ENCODE measurements at regions of chrX and their contacts with region 1.

Region 1: DNA sequence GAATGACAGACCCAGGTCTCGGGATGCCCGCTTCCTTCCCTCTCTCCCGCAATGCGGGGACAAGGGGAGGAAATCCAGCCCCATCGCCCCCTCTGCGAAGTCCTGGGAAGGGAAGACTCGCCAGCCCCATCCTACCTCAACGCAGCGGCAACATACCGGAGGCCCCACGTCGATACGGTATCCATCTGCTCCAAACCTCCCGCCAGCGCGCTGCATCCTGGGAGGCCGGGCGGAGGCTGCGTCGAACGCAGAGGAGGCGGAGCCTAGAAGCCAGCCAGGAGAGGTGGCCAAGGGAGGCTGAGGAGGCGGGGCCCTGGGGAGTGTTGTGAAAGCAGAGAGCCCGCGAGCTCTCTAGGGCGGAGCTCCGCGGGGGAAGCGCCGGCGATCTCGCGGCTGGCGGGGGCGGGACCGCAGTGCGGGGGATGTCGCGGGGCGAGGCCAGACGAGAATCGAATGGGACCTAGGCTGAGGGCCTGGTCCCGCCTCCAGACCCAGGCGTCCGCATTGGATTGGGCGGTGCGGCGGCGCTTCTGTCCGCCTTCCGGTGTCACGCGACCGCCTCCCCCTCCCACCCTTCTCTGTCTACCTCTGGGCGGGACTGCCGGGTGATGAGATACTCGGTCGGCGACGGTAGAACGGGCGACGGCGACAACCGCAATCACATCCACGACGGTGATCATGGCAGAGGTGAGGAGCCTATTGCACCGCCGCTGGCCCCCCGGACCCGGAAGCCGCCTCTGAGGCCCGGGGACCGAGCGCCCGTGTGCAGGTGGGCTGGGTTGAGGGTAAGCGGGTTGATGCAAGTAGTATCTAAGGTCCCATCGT is at the starts of genes FANCB and MOSPD2:
- DNase-seq: peak; percentile 95
- H3K4me3 Mint-ChIP-seq: peak within 1 kb of the TSS; percentile 77
- H3K27ac Mint-ChIP-seq: peak within 1 kb of the TSS; percentile 75
- H3K4me1 Mint-ChIP-seq: peaks cover 26% of the 10 kb centered on the region
- H3K27me3 Mint-ChIP-seq: no peaks in the 10 kb centered on the region
- total RNA-seq, gene FANCB: 16.5 to 17.9 TPM
- total RNA-seq, gene MOSPD2: 16.0 to 16.1 TPM

Region 2: DNA sequence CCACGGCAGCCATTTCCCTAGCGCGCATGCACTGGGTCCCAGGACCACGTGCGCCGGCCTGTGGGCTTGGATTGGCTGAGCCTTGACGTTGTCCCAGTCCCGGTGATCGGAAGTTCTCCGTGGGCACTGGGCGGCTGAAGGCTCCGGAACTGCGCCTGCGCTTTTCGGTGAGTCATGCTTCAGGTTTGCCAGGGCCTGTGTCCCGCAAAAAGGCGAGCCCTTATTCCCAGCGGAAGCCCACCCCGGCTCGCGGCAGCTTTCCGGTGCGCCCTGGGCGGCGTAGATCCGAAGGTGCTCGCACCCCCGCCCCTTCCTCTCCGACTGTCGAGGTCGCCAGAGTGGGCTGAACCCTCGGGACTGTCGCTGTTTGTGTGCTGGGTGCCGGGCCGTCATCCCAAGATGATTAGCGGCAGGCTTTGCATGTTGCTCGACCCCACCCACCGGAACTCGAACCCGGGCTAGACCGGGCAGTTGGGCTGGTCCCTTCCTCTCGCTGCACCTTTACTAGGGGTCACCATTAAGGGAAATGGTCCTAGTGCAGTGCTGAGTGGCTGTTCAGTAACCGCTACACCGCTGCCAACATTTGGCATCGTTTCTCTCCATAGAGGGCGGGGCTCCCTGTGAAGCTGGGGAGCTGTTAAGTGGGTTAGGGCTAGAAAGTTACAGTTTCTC is 1219.9 kb before region 1 on chrX and contains the start of gene TCEANC:
- CTCF ChIA-PET with region 1: no interaction called
- intact Hi-C with region 1: loop called (anchors 5 kb)
- DNase-seq: peak; percentile 95
- H3K4me3 Mint-ChIP-seq: peak within 1 kb of the TSS; percentile 88
- H3K27ac Mint-ChIP-seq: peak within 1 kb of the TSS; percentile 93
- H3K4me1 Mint-ChIP-seq: peaks cover 24% of the 10 kb centered on the region
- H3K27me3 Mint-ChIP-seq: no peaks in the 10 kb centered on the region
- total RNA-seq, gene TCEANC: 2.5 to 2.7 TPM

Region 3: DNA sequence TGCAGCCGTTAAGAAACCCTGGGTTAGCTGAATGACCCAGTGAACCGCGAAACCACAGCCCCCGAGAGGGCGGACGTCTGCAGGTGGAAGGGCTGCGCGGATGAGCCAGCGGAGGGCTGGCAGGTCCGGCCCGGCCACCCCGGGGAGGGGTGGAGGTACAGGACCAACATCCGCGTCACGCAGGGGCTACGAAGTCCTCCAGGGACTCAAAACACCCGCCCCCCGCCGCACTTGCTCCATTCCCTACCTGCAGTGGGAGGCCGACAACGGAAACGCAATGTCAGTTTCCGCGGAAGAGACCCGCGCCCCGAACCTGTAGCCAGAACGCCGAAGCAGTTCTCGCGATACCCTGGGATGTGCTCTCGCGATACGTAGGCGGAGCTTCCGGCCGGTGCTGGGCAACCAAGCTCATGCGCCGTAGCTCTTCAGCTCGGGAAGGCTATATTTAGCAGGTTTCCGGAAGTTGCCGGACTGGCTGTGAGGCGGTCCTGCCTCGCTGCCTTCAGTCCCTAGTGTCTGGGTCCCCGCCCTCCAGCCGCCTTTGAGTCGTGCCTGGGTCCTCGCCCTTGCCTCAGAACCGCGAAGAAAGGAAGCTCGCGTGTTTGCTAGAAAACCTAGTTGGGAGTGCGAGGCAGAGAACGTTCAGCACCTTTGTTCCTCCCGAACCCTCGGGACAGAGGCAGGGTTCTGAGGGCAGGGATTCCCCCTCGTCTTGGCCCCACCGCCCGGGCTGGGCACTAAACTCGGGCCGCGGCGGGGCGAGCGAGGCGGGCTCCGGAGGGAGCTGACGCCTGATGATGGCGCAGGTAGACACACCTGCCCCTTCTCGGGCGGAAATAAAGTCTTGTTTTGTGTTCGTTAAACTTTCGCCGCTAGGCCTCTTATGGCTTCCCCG is 1138.5 kb before region 1 on chrX and contains the starts of genes OFD1 and TRAPPC2:
- CTCF ChIA-PET with region 1: no interaction called
- intact Hi-C with region 1: loop called (anchors 10 kb)
- DNase-seq: peak; percentile 92
- H3K4me3 Mint-ChIP-seq: peak within 1 kb of the TSS; percentile 95
- H3K27ac Mint-ChIP-seq: peak within 1 kb of the TSS; percentile 92
- H3K4me1 Mint-ChIP-seq: peaks cover 43% of the 10 kb centered on the region
- H3K27me3 Mint-ChIP-seq: no peaks in the 10 kb centered on the region
- total RNA-seq, gene OFD1: 25.3 to 26.2 TPM
- total RNA-seq, gene TRAPPC2: 9.6 to 10.7 TPM

Region 4: GRCh38 chrX:14209034-14209433 is 664.0 kb before region 1 on chrX:
- CTCF ChIA-PET with region 1: no interaction called
- intact Hi-C with region 1: no loop called
- DNase-seq: no peak
- H3K4me3 Mint-ChIP-seq: no peak overlapping the region
- H3K27ac Mint-ChIP-seq: no peak overlapping the region
- H3K4me1 Mint-ChIP-seq: no peaks in the 10 kb centered on the region
- H3K27me3 Mint-ChIP-seq: no peaks in the 10 kb centered on the region

Region 5: GRCh38 chrX:14509325-14510057 is 363.6 kb before region 1 on chrX:
- CTCF ChIA-PET with region 1: no interaction called
- intact Hi-C with region 1: no loop called
- DNase-seq: no peak
- H3K4me3 Mint-ChIP-seq: no peak overlapping the region
- H3K27ac Mint-ChIP-seq: no peak overlapping the region
- H3K4me1 Mint-ChIP-seq: peaks cover 4% of the 10 kb centered on the region
- H3K27me3 Mint-ChIP-seq: no peaks in the 10 kb centered on the region

Region 6: DNA sequence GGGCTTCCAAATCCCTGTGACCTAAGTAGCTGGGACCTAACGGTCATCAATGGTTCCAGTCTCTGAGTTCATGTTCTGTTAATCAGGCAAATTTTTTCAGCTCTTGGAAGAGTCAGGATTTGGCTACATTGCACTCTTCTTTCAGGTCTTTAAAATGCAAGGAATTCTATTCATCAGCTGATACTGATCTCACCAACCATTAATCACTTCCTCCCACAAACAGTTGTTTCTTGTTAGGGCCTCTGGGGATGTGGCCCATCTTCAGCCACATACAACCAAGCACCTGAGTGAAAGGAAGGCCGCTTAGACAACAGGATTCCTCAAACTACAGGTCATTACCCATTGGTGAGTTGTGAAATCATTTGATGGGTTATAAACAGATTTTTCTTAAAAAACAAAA is 71.9 kb before region 1 on chrX:
- CTCF ChIA-PET with region 1: no interaction called
- intact Hi-C with region 1: no loop called
- DNase-seq: no peak
- H3K4me3 Mint-ChIP-seq: no peak overlapping the region
- H3K27ac Mint-ChIP-seq: no peak overlapping the region
- H3K4me1 Mint-ChIP-seq: peaks cover 13% of the 10 kb centered on the region
- H3K27me3 Mint-ChIP-seq: no peaks in the 10 kb centered on the region

Region 7: DNA sequence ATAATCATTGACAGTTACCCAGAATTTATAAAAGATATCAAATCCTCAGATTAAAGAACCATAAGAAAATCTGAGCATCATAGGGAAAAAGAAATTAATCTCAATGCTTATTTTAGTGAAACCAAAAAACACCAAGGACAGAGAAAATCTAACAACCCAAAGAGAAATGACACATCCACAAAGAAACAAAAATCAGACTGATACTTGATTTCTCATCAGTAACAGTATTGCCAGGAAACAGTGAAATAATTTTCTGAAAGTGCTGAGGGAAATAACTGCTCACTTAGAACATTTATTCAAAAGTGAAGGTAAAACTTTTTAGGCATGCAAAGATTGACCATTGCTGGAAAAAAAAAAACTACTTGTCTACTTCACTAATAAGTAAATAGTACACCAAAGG is 10.8 kb after region 1 on chrX:
- CTCF ChIA-PET with region 1: no interaction called
- intact Hi-C with region 1: loop called (anchors 1 kb)
- DNase-seq: no peak
- H3K4me3 Mint-ChIP-seq: peak overlapping the region; percentile 63
- H3K27ac Mint-ChIP-seq: peak overlapping the region; percentile 94
- H3K4me1 Mint-ChIP-seq: peaks cover 60% of the 10 kb centered on the region
- H3K27me3 Mint-ChIP-seq: no peaks in the 10 kb centered on the region

Region 8: GRCh38 chrX:15158736-15159406 is 285.8 kb after region 1 on chrX:
- CTCF ChIA-PET with region 1: no interaction called
- intact Hi-C with region 1: loop called (anchors 2 kb)
- DNase-seq: peak; percentile 51
- H3K4me3 Mint-ChIP-seq: peak overlapping the region; percentile 54
- H3K27ac Mint-ChIP-seq: peak overlapping the region; percentile 53
- H3K4me1 Mint-ChIP-seq: peaks cover 35% of the 10 kb centered on the region
- H3K27me3 Mint-ChIP-seq: no peaks in the 10 kb centered on the region

Region 9: GRCh38 chrX:15598036-15598435 is 725.0 kb after region 1 on chrX:
- CTCF ChIA-PET with region 1: no interaction called
- intact Hi-C with region 1: no loop called
- DNase-seq: no peak
- H3K4me3 Mint-ChIP-seq: no peak overlapping the region
- H3K27ac Mint-ChIP-seq: no peak overlapping the region
- H3K4me1 Mint-ChIP-seq: no peaks in the 10 kb centered on the region
- H3K27me3 Mint-ChIP-seq: no peaks in the 10 kb centered on the region

Region 10: GRCh38 chrX:16719334-16720084 is 1846.4 kb after region 1 on chrX and contains the start of gene SYAP1:
- CTCF ChIA-PET with region 1: no interaction called
- intact Hi-C with region 1: loop called (anchors 10 kb)
- DNase-seq: peak; percentile 93
- H3K4me3 Mint-ChIP-seq: peak within 1 kb of the TSS; percentile 89
- H3K27ac Mint-ChIP-seq: peak within 1 kb of the TSS; percentile 92
- H3K4me1 Mint-ChIP-seq: peaks cover 33% of the 10 kb centered on the region
- H3K27me3 Mint-ChIP-seq: no peaks in the 10 kb centered on the region
- total RNA-seq, gene SYAP1: 17.1 to 18.9 TPM